ENCODE measurements at regions of chr16 and their contacts with region 1.

Region 1: GRCh38 chr16:66608241-66609138 is 4.0 kb downstream of the CMTM3 start:
- DNase-seq: peak; percentile 88
- H3K4me3 Mint-ChIP-seq: peak overlapping the region; percentile 24
- H3K27ac Mint-ChIP-seq: peak overlapping the region; percentile 86
- H3K4me1 Mint-ChIP-seq: peaks cover 37% of the 10 kb centered on the region
- H3K27me3 Mint-ChIP-seq: peaks cover 5% of the 10 kb centered on the region

Region 2: DNA sequence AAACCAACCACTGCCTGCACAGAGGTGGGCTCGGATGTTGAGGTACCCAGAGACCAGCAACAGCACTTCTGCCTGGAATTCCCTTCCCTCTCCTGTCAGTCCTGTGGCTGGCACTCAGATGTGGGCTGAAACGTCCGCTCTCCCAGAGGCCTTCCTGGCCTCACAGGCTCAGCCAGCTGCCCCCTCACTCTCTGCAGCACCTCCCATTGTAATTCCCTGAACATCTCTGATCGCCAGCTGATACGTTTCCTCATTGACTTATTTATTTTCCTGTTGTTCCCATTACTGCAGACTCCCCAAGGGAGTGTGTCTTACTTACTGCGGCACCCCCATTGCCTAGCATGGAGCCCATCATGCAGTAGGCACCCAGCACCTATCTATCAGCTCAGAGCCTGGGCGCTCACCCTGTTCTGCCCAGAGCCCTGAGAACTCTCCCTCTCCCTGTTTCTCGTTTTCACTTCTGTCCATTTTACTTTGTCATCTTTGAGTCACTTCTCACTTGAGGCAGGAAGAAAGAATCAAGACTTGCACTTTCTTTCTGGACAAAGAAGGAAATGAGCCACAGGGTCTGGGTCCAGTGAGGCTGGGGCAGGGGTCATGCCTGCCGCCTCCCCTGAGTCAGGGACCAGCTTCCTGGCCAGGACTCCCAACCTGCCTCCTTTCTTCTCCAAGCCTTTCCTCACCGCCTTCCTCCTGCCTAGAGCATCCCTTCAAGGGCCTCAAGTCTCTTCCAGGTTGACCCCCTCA is 231.8 kb before region 1 on chr16:
- CTCF ChIA-PET with region 1: no interaction called
- DNase-seq: no peak
- H3K4me3 Mint-ChIP-seq: no peak overlapping the region
- H3K27ac Mint-ChIP-seq: no peak overlapping the region
- H3K4me1 Mint-ChIP-seq: no peaks in the 10 kb centered on the region
- H3K27me3 Mint-ChIP-seq: peaks cover 4% of the 10 kb centered on the region

Region 3: DNA sequence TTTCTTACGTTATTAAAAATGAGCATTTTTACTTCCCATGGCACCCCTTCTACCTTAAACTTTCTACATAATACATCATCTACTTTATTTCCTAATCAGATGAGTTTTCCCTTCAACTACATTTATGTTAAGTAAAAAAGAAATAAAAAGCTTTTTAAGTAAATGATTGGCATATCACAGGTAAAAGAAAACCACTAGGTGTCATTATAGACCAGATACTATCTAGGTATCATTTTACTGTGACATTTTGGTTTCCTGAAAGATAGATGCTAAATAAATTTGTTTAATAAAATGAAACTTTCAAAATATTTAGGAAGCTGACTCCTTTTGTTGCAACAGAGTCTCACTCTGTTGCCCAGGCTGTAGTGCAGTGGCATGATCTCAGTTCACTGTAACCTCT is 46.1 kb before region 1 on chr16:
- CTCF ChIA-PET with region 1: interaction called, 47 read pairs
- DNase-seq: no peak
- H3K4me3 Mint-ChIP-seq: no peak overlapping the region
- H3K27ac Mint-ChIP-seq: no peak overlapping the region
- H3K4me1 Mint-ChIP-seq: peaks cover 60% of the 10 kb centered on the region
- H3K27me3 Mint-ChIP-seq: no peaks in the 10 kb centered on the region

Region 4: DNA sequence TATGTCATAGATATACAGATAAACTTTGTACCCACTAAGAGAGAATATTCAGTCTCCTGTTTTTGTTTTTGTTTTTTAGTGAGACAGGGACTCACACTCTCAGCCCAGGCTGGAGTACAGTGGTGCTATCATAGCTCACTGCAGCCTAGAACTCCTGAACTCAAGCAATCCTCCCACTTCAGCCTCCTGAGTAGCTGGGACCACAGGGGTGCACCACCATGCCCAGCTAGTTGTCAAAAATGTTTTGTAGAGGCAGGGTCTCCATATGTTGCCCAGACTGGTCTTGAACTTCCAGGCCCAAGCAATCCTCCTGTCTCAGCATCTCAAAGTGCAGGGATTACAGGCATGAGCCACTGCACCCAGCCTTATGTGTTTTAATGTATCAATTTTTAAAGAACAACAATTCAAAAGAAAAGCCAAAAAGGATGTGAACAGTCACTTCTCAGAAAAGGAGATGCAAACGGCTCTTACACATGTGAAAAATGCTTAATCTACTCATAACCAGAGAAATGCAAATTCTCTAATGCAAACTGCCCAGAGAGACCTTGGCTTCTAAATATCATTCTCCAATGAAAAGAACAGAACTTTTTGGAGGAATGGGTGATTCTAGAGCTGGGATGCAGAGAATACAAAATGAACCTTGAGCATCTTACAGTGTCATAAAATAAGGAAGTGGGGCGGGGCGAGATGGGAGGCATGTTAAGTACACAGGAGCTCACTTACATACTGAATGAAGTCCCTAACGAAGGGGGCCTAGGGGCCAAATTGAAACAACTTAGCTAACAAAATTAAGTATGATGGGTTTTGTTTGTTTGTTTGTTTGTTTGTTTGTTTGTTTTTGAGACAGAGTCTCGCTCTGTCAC is 11.3 kb before region 1 on chr16:
- CTCF ChIA-PET with region 1: interaction called, 10 read pairs
- DNase-seq: peak; percentile 43
- H3K4me3 Mint-ChIP-seq: peak overlapping the region; percentile 41
- H3K27ac Mint-ChIP-seq: peak overlapping the region; percentile 95
- H3K4me1 Mint-ChIP-seq: peaks cover 57% of the 10 kb centered on the region
- H3K27me3 Mint-ChIP-seq: no peaks in the 10 kb centered on the region

Region 5: DNA sequence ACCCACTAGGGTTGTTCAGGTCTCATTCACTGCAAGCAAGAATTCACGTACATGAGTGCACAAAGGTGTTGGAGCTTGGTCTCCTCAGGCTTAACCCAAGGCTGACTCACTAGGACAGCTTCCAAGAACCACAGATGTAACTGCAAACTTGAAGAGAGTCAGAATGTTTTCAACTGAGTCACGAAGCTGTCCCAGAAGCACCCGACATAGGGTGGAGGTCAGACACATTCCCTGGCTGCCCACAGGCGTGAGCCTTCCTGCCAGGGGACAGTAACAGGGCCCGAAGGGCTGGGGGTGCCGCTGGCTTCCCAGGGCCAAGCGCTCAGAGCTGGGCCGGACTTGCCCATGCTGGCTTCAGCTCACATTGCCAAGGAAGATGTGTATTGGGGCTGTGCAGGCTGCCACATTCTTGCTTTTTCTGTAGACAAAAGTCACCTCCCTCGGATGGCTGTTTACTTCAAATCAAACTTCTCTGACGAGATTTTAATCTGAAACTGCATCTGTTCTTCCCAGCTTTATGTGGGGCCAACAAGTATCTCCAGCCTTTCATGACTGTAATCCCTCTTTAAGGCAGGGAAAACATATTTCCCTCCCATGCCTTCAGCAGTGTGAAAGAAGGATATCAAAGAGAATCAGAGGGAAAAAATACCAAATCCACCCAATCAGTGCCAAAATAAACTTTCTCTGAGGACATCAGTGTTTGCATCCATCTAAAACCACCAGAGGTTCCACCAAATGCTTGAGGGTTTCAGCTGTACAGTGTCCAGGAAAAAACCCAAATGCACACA is 10.3 kb after region 1 on chr16:
- CTCF ChIA-PET with region 1: interaction called, 16 read pairs
- DNase-seq: no peak
- H3K4me3 Mint-ChIP-seq: no peak overlapping the region
- H3K27ac Mint-ChIP-seq: no peak overlapping the region
- H3K4me1 Mint-ChIP-seq: no peaks in the 10 kb centered on the region
- H3K27me3 Mint-ChIP-seq: no peaks in the 10 kb centered on the region

Measured in activated naive CD4-positive, alpha-beta T cell treated with anti-CD3 and anti-CD28 coated beads, Interleukin-2, amount 10 ng/mL, durations not matched to agents 7 days and 5 days (primary cell).